Heart left ventricle (tissue), 16 donors: ENCODE measurements at regions of chr13 and their contacts with region 1.

Region 1: GRCh38 chr13:51583875-51584730 is at the start of gene WDFY2:
- DNase-seq: peak; percentile 100
- ATAC-seq: peak; percentile 95 to 98 (median 97)
- H3K4me3 ChIP-seq: peak within 1 kb of the TSS; percentile 76 to 96 (median 94)
- H3K27ac ChIP-seq: peak within 1 kb of the TSS; percentile 68 to 96 (median 88)
- H3K4me1 ChIP-seq: peaks cover 0 to 46% (median 12%) of the 10 kb centered on the region in 12 donors
- H3K27me3 ChIP-seq: no peaks in the 10 kb centered on the region
- CTCF ChIP-seq: peak in 7 of 12 donors; percentile 4 to 45 (median 28)
- POLR2A ChIP-seq: peak in 1 of 2 donors; percentile 92
- total RNA-seq, gene WDFY2: 3.9 to 12.6 (median 7.4) TPM

Region 2: DNA sequence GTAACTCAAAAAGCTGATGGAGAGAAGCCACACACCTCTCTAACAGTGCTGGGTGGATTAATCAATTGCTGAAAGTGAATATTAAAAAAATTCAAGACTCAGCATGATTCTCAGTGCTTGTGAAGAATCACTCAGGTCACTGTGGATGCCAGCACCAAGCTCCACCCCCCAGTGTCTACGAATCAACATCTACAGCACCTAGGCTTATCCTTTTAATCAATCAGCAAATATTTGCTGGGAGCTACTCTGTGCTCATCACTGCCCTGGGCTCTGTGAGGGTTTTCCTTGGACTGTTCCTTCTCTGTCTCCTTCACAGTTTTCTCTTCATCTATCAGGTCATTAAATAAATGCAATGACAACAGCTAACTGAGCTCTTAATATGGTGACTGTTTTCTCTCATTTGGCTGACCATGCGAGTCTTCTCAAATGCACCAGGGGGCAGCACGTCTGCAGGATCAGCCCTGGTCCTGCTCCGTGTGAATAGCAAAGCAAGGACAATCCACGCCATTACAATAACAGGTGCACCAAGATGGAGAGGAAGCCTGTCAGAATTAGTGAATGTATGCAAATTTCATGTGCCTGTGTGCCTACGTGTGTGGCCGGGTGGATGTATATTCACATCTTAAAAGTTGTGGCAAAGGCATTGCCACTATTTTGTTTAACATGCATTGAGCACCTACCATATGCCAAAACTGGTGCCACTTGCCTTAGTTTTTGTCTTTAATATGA is 458.4 kb before region 1 on chr13:
- intact Hi-C with region 1: no loop called
- DNase-seq: peak in 3 of 5 donors; percentile 35 to 62 (median 38)
- ATAC-seq: peak in 3 of 4 donors; percentile 73 to 84 (median 76)
- H3K4me3 ChIP-seq: no peak overlapping the region
- H3K27ac ChIP-seq: no peak overlapping the region
- H3K4me1 ChIP-seq: no peaks in the 10 kb centered on the region
- H3K27me3 ChIP-seq: no peaks in the 10 kb centered on the region
- CTCF ChIP-seq: peak; percentile 64 to 82 (median 70)
- POLR2A ChIP-seq: no peak

Region 3: DNA sequence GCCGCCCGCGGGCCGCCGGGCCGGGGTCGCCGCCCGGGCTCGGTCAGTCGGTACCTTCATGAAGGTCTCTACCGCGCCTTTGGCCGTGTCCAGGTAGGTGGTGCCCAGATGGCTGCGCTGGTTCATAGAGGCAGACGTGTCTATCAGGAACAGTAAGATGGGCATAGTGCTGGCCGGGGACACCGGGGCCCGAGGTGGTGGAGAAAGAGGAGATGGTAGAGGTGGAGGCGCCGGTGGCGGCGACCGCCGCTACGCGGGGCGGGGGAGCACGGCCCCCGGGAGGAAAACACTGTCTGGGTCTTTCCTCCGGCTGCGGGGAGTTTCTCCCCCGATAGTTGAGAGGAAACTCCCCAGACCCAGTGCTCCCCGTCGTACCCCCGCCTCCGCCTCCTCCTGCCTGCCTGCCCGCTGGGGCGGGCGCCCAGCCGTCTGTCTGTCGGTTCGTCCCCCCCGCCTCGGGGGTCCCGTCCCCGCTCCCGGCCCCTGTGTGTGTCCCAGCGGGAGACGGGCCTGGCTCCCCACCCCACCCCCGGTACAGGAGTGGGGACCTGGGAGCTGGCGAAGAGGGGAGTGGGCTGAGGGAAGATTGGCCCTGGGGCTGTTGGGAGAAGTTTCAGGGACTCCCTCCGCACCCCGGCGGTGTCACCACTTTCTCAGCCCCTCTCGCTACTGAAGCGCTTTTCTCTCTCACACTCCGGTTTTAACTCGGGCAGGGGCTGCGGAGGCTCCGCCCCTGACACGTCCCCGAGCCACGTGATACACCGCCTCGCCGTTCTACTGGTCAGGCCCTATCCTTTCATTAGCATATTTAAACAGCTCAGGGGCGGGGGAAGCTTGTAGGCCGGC is 131.5 kb before region 1 on chr13 and contains the start of gene INTS6:
- intact Hi-C with region 1: loop called (anchors 1 to 5 kb)
- DNase-seq: peak; percentile 99 to 100 (median 100)
- ATAC-seq: peak; percentile 92 to 98 (median 96)
- H3K4me3 ChIP-seq: peak within 1 kb of the TSS; percentile 83 to 99 (median 94)
- H3K27ac ChIP-seq: peak within 1 kb of the TSS; percentile 98 to 100 (median 99)
- H3K4me1 ChIP-seq: peaks cover 0 to 43% (median 21%) of the 10 kb centered on the region in 12 donors
- H3K27me3 ChIP-seq: no peaks in the 10 kb centered on the region
- CTCF ChIP-seq: no peak
- POLR2A ChIP-seq: peak; percentile 100
- total RNA-seq, gene INTS6: 18.4 to 30.2 (median 24.4) TPM

Region 4: GRCh38 chr13:51663973-51664957 is 80.2 kb after region 1 on chr13:
- intact Hi-C with region 1: loop called in 1 of 10 experiments (anchors 10 kb)
- DNase-seq: peak in 1 of 5 donors; percentile 20
- ATAC-seq: peak in 3 of 4 donors; percentile 24 to 57 (median 34)
- H3K4me3 ChIP-seq: no peak overlapping the region
- H3K27ac ChIP-seq: peak overlapping the region in 2 of 12 donors; percentile 6 to 22
- H3K4me1 ChIP-seq: peaks cover 0 to 36% (median 5%) of the 10 kb centered on the region in 12 donors
- H3K27me3 ChIP-seq: no peaks in the 10 kb centered on the region
- CTCF ChIP-seq: no peak
- POLR2A ChIP-seq: no peak

Region 5: GRCh38 chr13:51764184-51765141 is 180.4 kb after region 1 on chr13:
- intact Hi-C with region 1: loop called in 3 of 10 experiments (anchors 5 to 10 kb)
- DNase-seq: peak; percentile 65 to 83 (median 72)
- ATAC-seq: peak; percentile 81 to 93 (median 86)
- H3K4me3 ChIP-seq: peak overlapping the region in 3 of 12 donors; percentile 5 to 26 (median 21)
- H3K27ac ChIP-seq: peak overlapping the region; percentile 39 to 92 (median 72)
- H3K4me1 ChIP-seq: peaks cover 0 to 35% (median 29%) of the 10 kb centered on the region in 12 donors
- H3K27me3 ChIP-seq: no peaks in the 10 kb centered on the region
- CTCF ChIP-seq: peak in 1 of 12 donors; percentile 14
- POLR2A ChIP-seq: no peak

Region 6: DNA sequence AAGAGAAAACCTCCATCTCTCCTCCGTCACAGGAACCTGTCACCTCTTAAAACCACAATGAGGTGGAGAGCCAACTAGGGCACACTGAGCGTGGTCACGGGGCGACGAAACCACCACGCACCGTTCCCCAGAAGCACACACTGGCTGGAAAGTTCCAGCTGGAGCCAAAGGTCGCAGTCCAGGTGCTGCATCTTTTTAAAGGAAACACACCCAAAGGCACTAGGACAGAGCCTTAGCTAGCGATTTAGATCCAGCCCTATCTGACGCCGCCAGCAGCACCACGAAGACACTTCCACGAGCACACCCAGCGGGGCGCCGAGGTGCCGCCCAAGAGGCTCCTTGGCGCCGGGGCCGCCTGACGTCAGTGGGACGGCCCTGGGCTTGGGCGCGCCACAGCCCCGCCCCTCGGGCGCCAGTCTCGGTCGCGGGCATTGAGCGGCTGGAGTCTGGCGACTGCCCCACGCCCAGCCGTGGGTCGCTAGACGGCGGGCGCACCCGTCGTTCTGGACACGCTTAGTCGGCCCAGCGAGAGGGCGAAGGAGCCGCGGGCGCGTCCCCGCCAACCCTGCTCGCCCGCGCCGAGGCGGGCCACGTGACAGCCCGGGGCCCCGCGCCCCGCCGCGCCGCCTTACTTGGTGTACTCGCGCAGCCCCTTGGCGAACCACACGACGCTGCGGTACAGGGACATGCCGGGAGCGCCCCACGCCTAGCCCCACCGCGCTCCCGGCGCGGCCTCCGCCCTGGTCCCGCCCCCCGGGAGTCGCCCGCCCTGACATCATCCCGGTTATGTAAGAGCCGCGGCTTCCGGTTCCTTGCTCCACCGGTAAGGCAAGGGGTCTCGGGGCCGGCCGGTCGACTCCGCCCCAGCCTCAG is 219.6 kb after region 1 on chr13 and contains the start of gene DHRS12:
- intact Hi-C with region 1: loop called in 9 of 10 experiments (anchors 2 to 10 kb)
- DNase-seq: peak; percentile 94 to 96 (median 95)
- ATAC-seq: peak; percentile 70 to 93 (median 88)
- H3K4me3 ChIP-seq: peak within 1 kb of the TSS; percentile 60 to 97 (median 78)
- H3K27ac ChIP-seq: peak within 1 kb of the TSS; percentile 97 to 100 (median 100)
- H3K4me1 ChIP-seq: peaks cover 6 to 62% (median 41%) of the 10 kb centered on the region in 12 donors
- H3K27me3 ChIP-seq: no peaks in the 10 kb centered on the region
- CTCF ChIP-seq: peak in 3 of 12 donors; percentile 6 to 27 (median 19)
- POLR2A ChIP-seq: peak in 1 of 2 donors; percentile 94
- total RNA-seq, gene DHRS12: 4.8 to 13.1 (median 12.1) TPM